ENCODE measurements at regions of chr5 and their contacts with region 1.

Region 1: DNA sequence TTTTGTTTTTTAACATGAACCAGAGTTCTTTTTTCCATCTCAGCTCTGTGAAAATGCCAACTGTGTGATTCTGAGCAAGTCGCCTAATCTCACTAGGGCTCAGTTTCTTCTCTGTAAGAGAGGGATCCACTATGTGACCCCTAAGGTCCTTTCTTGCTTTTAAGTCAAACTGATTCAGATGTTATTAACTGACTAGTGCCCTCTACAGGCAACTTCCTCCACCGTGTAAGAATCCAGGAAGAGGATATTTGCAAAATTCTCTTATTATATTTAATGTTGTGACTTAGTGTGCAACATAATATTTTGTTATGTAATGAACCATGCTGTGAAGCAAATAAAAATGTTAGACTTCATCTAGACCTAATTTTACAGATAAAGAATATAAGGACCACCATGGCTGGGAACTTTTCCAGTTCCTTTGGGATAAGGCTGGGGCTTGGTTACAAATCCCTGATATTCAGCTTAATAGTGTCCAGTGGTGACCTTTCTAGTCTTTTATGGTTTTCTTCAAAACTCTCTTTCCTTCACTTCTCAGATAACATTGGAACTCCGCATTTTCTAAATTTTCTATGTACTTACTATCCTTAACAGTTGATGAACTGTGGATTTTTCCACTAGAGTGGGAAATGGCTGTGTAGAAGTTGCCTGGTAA is 244.7 kb downstream of the PIK3R1 start:
- DNase-seq: peak; percentile 52
- H3K4me3 Mint-ChIP-seq: no peak overlapping the region
- H3K27ac Mint-ChIP-seq: no peak overlapping the region
- H3K4me1 Mint-ChIP-seq: peaks cover 49% of the 10 kb centered on the region
- H3K27me3 Mint-ChIP-seq: no peaks in the 10 kb centered on the region
- CTCF ChIP-seq: peak; percentile 24

Region 2: DNA sequence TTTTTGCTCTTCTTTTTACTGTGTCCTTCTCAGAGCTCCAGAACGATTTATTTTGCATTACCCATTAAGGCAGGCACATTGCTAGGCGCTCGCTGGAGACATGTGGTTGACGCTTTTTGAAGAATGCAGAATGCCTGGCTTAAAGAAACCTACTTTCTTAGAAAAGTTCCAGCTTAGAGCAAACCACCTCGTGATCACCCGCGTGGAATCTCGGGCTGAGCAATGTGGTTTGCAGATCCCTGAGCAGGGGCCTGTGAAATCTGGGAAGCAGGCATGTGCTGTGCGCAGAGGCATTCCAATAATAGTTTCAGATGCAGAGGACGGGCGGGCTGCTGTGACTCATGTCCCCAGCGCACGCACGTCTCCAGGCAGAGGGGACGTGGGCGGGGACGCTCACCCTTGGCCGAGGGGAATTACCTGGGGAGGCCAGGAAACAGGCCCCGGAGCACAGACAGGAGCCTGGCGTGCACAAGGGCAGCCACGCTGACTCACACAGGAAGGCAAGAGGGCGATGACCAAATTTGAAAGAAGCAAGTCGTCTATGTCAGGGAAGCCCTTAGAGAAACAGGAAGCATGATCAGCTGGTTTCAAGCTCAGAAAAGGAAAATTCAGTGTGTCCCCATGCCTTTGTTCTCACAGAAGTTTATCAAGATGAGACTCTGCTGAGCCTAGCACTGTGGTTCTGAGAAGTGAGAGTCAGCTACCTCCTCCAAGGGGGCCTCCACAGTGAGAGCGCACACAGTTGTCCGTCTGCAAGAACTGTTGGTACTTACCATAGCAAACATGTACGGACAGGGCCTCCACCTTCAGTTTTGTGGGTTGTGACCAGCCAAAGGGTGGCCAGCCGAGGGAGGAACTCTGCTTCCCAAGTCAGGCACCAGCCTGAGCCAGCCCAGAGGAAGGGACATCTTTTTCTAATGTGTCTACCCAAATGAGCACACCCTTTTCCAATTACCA is 26.1 kb before region 1 on chr5:
- CTCF ChIA-PET with region 1: interaction called, 5 read pairs
- intact Hi-C with region 1: loop called (anchors 2 kb)
- DNase-seq: peak; percentile 97
- H3K4me3 Mint-ChIP-seq: peak overlapping the region; percentile 27
- H3K27ac Mint-ChIP-seq: peak overlapping the region; percentile 88
- H3K4me1 Mint-ChIP-seq: peaks cover 50% of the 10 kb centered on the region
- H3K27me3 Mint-ChIP-seq: no peaks in the 10 kb centered on the region
- CTCF ChIP-seq: no peak

Region 3: GRCh38 chr5:68932830-68933434 is 472.7 kb after region 1 on chr5:
- CTCF ChIA-PET with region 1: no interaction called
- intact Hi-C with region 1: no loop called
- DNase-seq: no peak
- H3K4me3 Mint-ChIP-seq: no peak overlapping the region
- H3K27ac Mint-ChIP-seq: no peak overlapping the region
- H3K4me1 Mint-ChIP-seq: no peaks in the 10 kb centered on the region
- H3K27me3 Mint-ChIP-seq: no peaks in the 10 kb centered on the region
- CTCF ChIP-seq: no peak

Measured in Calu3 (cell line).